Left cardiac atrium (tissue), 4 donors: ENCODE measurements at regions of chr13 and their contacts with region 1.

Region 1: GRCh38 chr13:51452361-51453206 is at the start of gene INTS6:
- DNase-seq: peak; percentile 99
- ATAC-seq: peak; percentile 91 to 94
- total RNA-seq, gene INTS6: 23.9 to 25.3 TPM

Region 2: GRCh38 chr13:51583875-51584730 is 131.5 kb after region 1 on chr13 and contains the start of gene WDFY2:
- intact Hi-C with region 1: loop called (anchors 2 to 10 kb)
- DNase-seq: peak; percentile 99
- ATAC-seq: peak; percentile 95 to 96
- total RNA-seq, gene WDFY2: 5.4 to 7.2 TPM

Region 3: GRCh38 chr13:51599444-51600176 is 147.0 kb after region 1 on chr13:
- intact Hi-C with region 1: no loop called
- DNase-seq: no peak
- ATAC-seq: no peak

Region 4: DNA sequence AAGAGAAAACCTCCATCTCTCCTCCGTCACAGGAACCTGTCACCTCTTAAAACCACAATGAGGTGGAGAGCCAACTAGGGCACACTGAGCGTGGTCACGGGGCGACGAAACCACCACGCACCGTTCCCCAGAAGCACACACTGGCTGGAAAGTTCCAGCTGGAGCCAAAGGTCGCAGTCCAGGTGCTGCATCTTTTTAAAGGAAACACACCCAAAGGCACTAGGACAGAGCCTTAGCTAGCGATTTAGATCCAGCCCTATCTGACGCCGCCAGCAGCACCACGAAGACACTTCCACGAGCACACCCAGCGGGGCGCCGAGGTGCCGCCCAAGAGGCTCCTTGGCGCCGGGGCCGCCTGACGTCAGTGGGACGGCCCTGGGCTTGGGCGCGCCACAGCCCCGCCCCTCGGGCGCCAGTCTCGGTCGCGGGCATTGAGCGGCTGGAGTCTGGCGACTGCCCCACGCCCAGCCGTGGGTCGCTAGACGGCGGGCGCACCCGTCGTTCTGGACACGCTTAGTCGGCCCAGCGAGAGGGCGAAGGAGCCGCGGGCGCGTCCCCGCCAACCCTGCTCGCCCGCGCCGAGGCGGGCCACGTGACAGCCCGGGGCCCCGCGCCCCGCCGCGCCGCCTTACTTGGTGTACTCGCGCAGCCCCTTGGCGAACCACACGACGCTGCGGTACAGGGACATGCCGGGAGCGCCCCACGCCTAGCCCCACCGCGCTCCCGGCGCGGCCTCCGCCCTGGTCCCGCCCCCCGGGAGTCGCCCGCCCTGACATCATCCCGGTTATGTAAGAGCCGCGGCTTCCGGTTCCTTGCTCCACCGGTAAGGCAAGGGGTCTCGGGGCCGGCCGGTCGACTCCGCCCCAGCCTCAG is 351.1 kb after region 1 on chr13 and contains the start of gene DHRS12:
- intact Hi-C with region 1: loop called in 1 of 2 experiments (anchors 2 kb)
- DNase-seq: peak; percentile 93
- ATAC-seq: peak; percentile 91 to 92
- total RNA-seq, gene DHRS12: 9.1 to 13.3 TPM